Activated CD4-positive, alpha-beta memory T cell treated with anti-CD3 and anti-CD28 coated beads for 36 hours (primary cell): ENCODE measurements at regions of chr19 and their contacts with region 1.

Region 1: GRCh38 chr19:14366498-14366915 is 14.7 kb upstream of the ADGRE5 start:
- DNase-seq: peak; percentile 96
- H3K4me3 Mint-ChIP-seq: peak overlapping the region; percentile 63
- H3K27ac Mint-ChIP-seq: peak overlapping the region; percentile 100
- H3K4me1 Mint-ChIP-seq: peaks cover 67% of the 10 kb centered on the region
- H3K27me3 Mint-ChIP-seq: no peaks in the 10 kb centered on the region

Region 2: DNA sequence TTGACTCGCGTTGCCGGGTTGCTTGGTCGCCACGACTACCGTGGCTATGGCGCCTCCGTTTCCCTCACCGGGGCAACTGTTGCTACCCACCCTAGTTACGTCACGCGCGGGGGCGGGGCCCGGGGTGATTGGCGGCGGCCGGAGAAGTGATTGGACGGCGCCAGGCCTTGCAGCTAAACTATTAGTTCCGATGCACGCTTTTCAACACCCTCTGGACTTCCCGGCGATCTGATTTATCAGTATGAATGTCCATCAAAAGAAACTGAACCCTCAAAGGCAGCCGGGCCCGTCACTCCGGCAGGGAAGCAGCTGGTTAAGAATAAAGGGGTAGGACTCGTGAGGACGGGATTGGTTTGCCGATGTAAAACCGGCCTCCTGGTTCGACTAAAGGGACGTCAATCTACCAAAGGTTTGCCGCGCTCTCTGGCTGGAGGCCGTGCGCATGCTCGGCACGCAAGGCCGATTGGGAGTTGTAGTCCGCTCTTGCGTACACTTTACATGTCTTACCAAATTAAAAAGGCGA is 360.2 kb before region 1 on chr19 and contains the start of gene RFX1:
- CTCF ChIA-PET with region 1: no interaction called
- POLR2A ChIA-PET with region 1: no interaction called
- intact Hi-C with region 1: loop called (anchors 10 kb)
- DNase-seq: peak; percentile 100
- H3K4me3 Mint-ChIP-seq: peak within 1 kb of the TSS; percentile 89
- H3K27ac Mint-ChIP-seq: peak within 1 kb of the TSS; percentile 97
- H3K4me1 Mint-ChIP-seq: peaks cover 38% of the 10 kb centered on the region
- H3K27me3 Mint-ChIP-seq: no peaks in the 10 kb centered on the region
- total RNA-seq, gene RFX1: 14.4 to 15.2 TPM

Region 3: DNA sequence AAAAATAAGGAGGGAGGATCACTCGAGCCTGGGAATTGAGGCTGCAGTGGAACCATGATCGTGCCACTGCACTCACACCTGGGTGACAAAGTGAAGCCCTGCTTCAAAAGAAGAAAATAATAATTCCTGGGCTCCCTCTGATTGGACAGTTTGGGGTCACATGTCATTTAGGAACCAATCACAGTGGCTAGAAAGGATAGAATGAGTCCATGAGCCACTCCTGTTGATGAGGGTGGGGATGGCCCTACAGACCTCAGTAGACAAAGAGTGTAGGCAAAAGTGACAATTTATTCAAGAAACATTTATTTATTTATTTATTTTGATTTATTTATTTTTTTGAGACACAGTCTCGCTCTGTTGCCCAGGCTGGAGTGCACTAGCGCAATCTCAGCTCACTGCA is 12.1 kb before region 1 on chr19:
- CTCF ChIA-PET with region 1: interaction called, 44 read pairs
- POLR2A ChIA-PET with region 1: interaction called, 5 read pairs
- intact Hi-C with region 1: no loop called
- DNase-seq: no peak
- H3K4me3 Mint-ChIP-seq: no peak overlapping the region
- H3K27ac Mint-ChIP-seq: peak overlapping the region; percentile 51
- H3K4me1 Mint-ChIP-seq: peaks cover 31% of the 10 kb centered on the region
- H3K27me3 Mint-ChIP-seq: no peaks in the 10 kb centered on the region

Region 4: DNA sequence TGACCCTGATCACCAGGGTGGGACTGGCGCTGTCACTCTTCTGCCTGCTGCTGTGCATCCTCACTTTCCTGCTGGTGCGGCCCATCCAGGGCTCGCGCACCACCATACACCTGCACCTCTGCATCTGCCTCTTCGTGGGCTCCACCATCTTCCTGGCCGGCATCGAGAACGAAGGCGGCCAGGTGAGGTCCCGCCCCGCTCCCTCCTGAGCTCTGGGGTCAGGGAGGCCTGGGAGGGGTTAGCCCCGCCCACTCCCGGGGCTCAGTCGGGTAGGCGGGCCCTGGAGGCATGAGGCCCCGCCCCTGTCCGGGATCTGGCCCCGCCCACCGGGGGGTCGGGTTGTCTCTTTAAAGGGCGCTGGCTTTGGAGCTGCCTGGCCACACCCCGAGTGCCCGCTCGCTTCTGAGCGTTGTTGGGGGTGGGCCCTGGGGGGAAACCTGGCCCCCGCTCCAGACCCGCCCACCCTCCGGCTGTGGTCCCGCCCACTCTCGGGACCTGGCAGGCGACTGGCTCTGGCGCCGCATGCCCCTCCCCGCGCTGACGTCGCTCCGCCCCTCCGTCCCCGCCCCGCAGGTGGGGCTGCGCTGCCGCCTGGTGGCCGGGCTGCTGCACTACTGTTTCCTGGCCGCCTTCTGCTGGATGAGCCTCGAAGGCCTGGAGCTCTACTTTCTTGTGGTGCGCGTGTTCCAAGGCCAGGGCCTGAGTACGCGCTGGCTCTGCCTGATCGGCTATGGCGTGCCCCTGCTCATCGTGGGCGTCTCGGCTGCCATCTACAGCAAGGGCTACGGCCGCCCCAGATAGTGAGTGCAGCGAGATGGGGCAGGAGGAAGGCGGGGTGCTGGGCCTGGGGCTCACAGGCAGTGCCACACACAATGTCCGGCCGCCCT is 39.5 kb after region 1 on chr19:
- CTCF ChIA-PET with region 1: interaction called, 115 read pairs
- POLR2A ChIA-PET with region 1: interaction called, 5 read pairs
- intact Hi-C with region 1: loop called (anchors 1 kb)
- DNase-seq: peak; percentile 93
- H3K4me3 Mint-ChIP-seq: no peak overlapping the region
- H3K27ac Mint-ChIP-seq: peak overlapping the region; percentile 76
- H3K4me1 Mint-ChIP-seq: peaks cover 25% of the 10 kb centered on the region
- H3K27me3 Mint-ChIP-seq: no peaks in the 10 kb centered on the region

Region 5: DNA sequence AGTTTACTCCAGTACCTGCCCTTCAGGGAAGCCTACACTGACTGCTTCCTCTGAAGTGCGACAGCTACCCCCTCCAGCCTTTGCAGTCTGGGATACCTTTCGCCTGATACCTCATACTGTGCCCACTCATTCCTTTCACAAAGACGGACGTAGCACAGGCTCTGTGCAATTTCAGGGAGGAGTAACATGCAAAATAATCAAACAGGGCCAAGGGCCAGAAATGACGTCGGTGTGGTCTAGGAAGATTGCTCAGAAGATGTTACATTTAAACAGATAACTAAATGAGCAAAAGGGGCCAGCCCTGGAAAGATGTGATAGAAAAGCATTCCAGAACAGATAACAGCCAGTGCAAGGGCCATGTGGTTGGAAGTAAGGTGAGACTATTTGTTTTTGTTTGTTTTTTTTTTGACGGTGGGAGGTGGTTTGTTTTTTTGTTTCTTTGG is 59.2 kb after region 1 on chr19:
- CTCF ChIA-PET with region 1: no interaction called
- POLR2A ChIA-PET with region 1: no interaction called
- intact Hi-C with region 1: no loop called
- DNase-seq: no peak
- H3K4me3 Mint-ChIP-seq: no peak overlapping the region
- H3K27ac Mint-ChIP-seq: no peak overlapping the region
- H3K4me1 Mint-ChIP-seq: peaks cover 2% of the 10 kb centered on the region
- H3K27me3 Mint-ChIP-seq: no peaks in the 10 kb centered on the region

Region 6: DNA sequence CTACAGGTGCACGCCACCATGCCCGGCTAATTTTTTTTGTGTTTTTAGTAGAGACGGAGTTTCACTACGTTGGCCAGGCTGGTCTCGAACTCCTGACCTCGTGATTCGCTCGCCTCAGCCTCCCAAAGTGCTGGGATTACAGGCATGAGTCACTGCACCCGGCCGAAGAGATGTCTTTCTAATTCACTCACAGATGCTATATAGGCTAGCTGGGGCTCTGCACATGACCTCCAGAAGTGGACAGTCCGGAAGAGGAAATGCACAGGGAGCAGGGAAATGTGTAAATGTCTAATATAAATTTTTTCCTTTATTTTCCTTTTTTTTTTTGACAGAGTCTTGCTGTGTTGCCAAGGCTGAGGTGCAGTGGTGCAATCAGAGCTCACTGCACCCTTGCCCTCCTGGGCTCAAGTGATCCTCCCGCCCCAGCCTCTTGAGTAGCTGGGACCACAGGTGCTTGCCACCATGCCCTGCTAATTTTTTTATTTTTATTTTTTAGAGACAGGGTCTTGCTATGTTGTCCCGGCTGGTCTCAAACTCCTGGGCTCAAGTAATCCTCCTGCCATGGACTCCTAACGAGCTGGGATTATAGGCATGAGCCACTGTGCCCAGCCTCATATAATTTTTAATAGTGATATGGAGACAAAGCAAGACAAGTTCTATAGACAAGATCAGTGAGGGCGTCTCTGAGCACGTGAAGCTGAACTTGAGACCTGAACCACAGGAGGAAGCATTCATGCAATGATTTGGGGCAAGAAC is 121.0 kb after region 1 on chr19:
- CTCF ChIA-PET with region 1: interaction called, 4 read pairs
- POLR2A ChIA-PET with region 1: no interaction called
- intact Hi-C with region 1: loop called (anchors 5 kb)
- DNase-seq: no peak
- H3K4me3 Mint-ChIP-seq: no peak overlapping the region
- H3K27ac Mint-ChIP-seq: no peak overlapping the region
- H3K4me1 Mint-ChIP-seq: peaks cover 4% of the 10 kb centered on the region
- H3K27me3 Mint-ChIP-seq: no peaks in the 10 kb centered on the region